ENCODE measurements at regions of chr2 and their contacts with region 1.

Region 1: GRCh38 chr2:232901736-232902578 is 31.9 kb downstream of the SNORC start:
- DNase-seq: peak; percentile 83
- ATAC-seq: peak; percentile 95
- H3K4me3 ChIP-seq: peak overlapping the region; percentile 26 to 31
- H3K27ac ChIP-seq: peak overlapping the region; percentile 77
- H3K4me1 ChIP-seq: peaks cover 16 to 34% of the 10 kb centered on the region in 2 experiments
- H3K27me3 ChIP-seq: no peaks in the 10 kb centered on the region
- CTCF ChIP-seq: no peak
- POLR2A ChIP-seq: no peak
- RAD21 ChIP-seq: peak; percentile 42; the same call in 1 of the 2 replicates

Region 2: DNA sequence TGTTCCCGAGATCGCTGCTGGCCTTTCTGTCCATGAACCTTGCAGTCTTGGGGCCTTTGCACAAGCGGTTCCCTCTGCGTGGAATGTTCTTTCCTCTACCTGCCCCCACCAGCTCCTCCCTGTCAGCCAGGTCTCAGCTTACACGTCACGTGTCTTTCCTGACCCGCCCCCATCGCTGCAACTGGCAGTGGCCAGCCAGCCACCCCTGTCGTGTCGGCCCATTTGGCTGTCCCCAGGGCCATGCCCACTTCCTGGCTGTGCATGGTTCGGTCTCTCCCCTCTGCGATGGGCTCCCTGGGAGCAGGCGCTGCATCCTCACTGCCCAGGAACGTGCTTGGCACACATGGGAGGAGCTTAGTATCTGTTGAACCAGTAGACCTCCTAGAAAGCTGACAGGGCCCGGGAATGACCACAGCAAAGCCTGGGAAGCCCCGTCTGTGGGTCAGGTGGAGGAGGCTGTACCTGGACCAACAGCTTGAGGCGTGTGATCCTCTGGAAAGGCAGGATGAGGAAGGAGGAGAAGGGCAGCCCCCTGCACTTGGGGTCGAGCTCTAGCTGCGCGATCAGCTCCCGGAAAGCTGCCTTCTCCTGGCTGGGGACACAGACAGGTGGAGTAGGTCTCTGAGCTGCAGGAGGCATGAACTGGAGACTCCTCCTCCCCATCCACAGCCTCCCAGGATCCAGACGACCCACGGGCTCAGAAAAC is 10.9 kb before region 1 on chr2:
- CTCF ChIA-PET with region 1: no interaction called
- POLR2A ChIA-PET with region 1: interaction called, 10 read pairs
- RAD21 ChIA-PET with region 1: no interaction called
- intact Hi-C with region 1: no loop called
- DNase-seq: peak; percentile 77
- ATAC-seq: peak; percentile 89
- H3K4me3 ChIP-seq: peak overlapping the region; percentile 64
- H3K27ac ChIP-seq: peak overlapping the region; percentile 43; the same call in 1 of the 2 replicates
- H3K4me1 ChIP-seq: peaks cover 15 to 39% of the 10 kb centered on the region in 2 experiments
- H3K27me3 ChIP-seq: no peaks in the 10 kb centered on the region
- CTCF ChIP-seq: no peak
- POLR2A ChIP-seq: no peak
- RAD21 ChIP-seq: peak; percentile 34; the same call in 1 of the 2 replicates

Region 3: DNA sequence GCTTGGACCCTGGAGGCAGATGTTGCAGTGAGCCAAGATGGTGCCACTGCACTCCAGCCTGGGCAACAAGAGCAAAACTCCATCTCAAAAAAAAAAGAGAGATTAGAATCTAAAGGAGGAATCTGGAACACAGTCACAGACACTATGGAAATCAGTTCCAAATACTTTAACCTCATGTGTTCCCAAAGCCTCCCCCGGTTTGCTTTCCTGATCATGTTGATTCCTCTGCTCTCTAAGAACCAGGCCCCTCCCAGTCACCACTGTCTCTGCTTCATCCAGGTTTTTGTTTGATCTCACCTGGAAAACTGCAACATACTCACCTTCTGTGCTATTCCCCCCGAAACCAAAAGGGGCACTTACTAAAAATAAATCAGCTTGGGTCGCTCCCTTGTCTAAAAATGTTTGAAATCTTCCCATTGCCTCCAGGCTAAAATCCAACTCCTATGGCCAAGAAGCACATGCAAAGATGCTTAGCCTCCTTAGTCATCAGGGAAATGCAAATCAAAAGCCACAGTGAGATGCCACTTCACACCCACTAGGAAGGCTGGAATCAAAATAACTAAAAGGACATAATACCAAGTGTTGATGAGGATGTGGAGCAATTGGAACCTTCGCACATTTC is 124.3 kb after region 1 on chr2:
- CTCF ChIA-PET with region 1: no interaction called
- POLR2A ChIA-PET with region 1: interaction called, 4 read pairs
- RAD21 ChIA-PET with region 1: interaction called in 1 of 2 experiments, 3 read pairs
- intact Hi-C with region 1: loop called (anchors 5 kb)
- DNase-seq: no peak
- ATAC-seq: peak; percentile 28; the same call in 1 of the 2 replicates
- H3K4me3 ChIP-seq: no peak overlapping the region
- H3K27ac ChIP-seq: no peak overlapping the region
- H3K4me1 ChIP-seq: peaks cover 10 to 40% of the 10 kb centered on the region in 2 experiments; a peak in 3 of 4 replicates
- H3K27me3 ChIP-seq: no peaks in the 10 kb centered on the region
- CTCF ChIP-seq: 0 out of 6 replicates have a peak, but pooled peaks of 1 of the 3 experiments have one; percentile 2
- POLR2A ChIP-seq: no peak
- RAD21 ChIP-seq: no peak

Region 4: GRCh38 chr2:233288719-233289118 is 386.8 kb after region 1 on chr2:
- CTCF ChIA-PET with region 1: no interaction called
- POLR2A ChIA-PET with region 1: no interaction called
- RAD21 ChIA-PET with region 1: no interaction called
- intact Hi-C with region 1: no loop called
- DNase-seq: no peak
- ATAC-seq: no peak
- H3K4me3 ChIP-seq: no peak overlapping the region
- H3K27ac ChIP-seq: no peak overlapping the region; the same call in 1 of the 2 replicates
- H3K4me1 ChIP-seq: no peaks in the 10 kb centered on the region
- H3K27me3 ChIP-seq: no peaks in the 10 kb centered on the region
- CTCF ChIP-seq: no peak
- POLR2A ChIP-seq: no peak
- RAD21 ChIP-seq: no peak

Measured in HCT116 (cell line).